Heart right ventricle (tissue), 16 donors: ENCODE measurements at regions of chr7 and their contacts with region 1.

Region 1: DNA sequence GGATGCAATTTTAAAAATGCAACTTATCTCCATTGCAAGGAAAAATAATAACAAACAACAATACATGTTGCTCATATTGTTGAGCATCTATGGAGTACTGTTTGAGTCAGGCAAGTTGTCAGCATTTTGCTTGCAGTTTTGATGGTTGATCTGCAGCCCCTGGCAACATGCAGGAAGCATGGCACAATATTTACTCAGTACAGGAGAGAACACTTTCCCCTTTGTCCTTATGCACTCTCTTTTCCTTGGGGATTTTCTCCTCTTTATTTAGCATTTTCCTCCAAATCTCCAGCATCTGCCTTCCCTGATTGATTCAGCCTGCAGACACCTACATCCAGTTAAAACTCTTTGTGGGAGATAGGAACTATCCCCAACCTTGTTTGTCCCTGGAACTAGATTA is 620.5 kb upstream of the LRRN3 start:
- DNase-seq: no peak
- ATAC-seq: no peak
- H3K4me3 ChIP-seq: no peak overlapping the region
- H3K27ac ChIP-seq: no peak overlapping the region
- H3K4me1 ChIP-seq: no peaks in the 10 kb centered on the region
- H3K27me3 ChIP-seq: no peaks in the 10 kb centered on the region
- CTCF ChIP-seq: no peak

Region 2: GRCh38 chr7:110388457-110388856 is 82.0 kb before region 1 on chr7:
- intact Hi-C with region 1: no loop called
- DNase-seq: no peak
- ATAC-seq: no peak
- H3K4me3 ChIP-seq: no peak overlapping the region
- H3K27ac ChIP-seq: no peak overlapping the region
- H3K4me1 ChIP-seq: no peaks in the 10 kb centered on the region
- H3K27me3 ChIP-seq: no peaks in the 10 kb centered on the region
- CTCF ChIP-seq: no peak

Region 3: DNA sequence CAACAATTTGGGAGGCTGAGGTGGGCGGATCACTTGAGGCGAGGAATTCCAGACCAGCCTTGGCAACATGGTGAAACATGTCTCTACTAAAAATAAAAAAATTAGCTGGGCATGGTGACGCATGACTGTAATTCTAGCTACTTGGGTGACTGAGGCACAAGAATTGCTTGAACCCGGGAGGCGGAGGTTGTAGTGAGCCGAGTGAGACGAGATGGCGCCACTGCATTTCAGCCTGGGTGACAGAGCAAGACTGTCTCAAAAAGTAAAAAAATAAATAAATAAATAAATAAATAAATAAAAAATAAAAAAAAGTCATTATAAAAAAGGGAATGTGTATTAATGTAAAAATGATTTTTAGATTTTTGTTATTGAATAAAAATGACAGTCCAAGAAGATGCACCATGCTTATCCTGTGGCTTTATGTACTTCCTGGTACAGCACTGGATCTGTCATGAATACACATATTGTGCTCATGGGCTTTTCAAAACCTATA is 38.3 kb before region 1 on chr7:
- intact Hi-C with region 1: loop called in 1 of 10 experiments (anchors 2 kb)
- DNase-seq: no peak
- ATAC-seq: no peak
- H3K4me3 ChIP-seq: no peak overlapping the region
- H3K27ac ChIP-seq: no peak overlapping the region
- H3K4me1 ChIP-seq: no peaks in the 10 kb centered on the region
- H3K27me3 ChIP-seq: no peaks in the 10 kb centered on the region
- CTCF ChIP-seq: no peak

Region 4: DNA sequence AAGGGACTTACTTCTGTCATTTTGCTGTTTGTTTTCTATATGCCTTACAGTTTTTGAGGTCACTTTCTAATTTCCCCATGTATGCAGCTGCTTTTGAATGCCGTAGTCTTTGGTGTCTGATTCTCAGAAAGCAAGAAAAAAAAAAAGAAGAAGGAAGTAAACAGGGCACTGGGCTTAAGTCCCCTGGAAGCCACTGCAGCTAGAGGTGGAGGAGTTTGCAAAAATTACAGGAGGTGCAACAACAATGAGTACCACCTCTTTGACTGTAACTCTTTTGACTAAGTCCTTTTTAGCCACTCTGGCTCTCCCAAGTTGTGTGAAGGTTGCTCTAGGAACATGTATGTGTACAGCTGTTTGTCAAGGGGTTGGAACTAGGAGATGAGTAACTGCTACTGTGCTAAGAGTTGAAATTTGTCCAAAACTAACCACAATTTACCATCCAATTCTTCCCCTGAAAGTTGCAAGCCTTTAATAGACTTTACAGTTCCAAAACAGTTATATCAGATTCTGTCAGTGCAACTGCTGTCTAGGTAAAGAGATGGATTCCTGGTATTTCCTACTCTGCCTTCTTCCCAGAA is 32.6 kb after region 1 on chr7:
- intact Hi-C with region 1: no loop called
- DNase-seq: no peak
- ATAC-seq: no peak
- H3K4me3 ChIP-seq: no peak overlapping the region
- H3K27ac ChIP-seq: no peak overlapping the region
- H3K4me1 ChIP-seq: no peaks in the 10 kb centered on the region
- H3K27me3 ChIP-seq: no peaks in the 10 kb centered on the region
- CTCF ChIP-seq: no peak

Region 5: GRCh38 chr7:110531186-110531585 is 60.8 kb after region 1 on chr7:
- intact Hi-C with region 1: no loop called
- DNase-seq: no peak
- ATAC-seq: no peak
- H3K4me3 ChIP-seq: no peak overlapping the region
- H3K27ac ChIP-seq: no peak overlapping the region
- H3K4me1 ChIP-seq: peaks cover 0 to 10% (median 3%) of the 10 kb centered on the region in 9 donors
- H3K27me3 ChIP-seq: no peaks in the 10 kb centered on the region
- CTCF ChIP-seq: no peak

Region 6: DNA sequence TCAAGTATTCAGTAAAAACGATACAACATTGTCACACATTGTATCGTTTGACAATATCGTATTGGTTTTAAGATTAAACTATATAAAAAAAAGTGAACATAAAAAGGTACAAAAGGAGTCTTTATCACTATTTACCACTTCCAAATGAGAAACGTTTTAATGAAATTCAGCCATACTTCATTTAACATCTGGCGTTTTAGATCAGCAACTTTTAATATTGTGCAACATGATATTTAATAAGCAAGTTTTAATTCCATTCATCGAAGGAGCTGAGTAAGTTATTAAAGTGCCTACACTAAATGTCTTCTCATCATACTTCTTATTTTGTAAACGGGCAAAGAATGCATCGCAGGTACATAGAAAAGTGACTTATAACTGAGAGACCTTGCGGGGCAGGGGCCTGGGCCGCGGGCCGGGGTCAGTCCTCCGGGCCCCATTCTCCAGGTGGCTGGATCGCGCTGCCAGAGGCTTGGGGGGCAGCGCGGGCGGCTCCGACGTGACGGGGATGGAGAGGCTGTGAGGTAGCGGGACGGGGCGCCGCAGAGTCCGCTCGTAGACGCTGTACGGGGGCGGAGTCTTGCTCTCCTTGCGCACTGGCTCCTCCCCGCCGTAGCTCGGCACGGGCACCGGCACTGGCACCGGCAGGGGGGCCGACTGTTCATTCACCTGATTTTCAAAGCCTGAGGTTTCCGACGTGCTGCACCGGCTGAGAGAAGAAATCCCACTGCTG is 1257.7 kb after region 1 on chr7:
- intact Hi-C with region 1: no loop called
- DNase-seq: no peak
- ATAC-seq: peak in 1 of 8 donors; percentile 41
- H3K4me3 ChIP-seq: no peak overlapping the region
- H3K27ac ChIP-seq: no peak overlapping the region
- H3K4me1 ChIP-seq: no peaks in the 10 kb centered on the region
- H3K27me3 ChIP-seq: no peaks in the 10 kb centered on the region
- CTCF ChIP-seq: no peak